ENCODE measurements at regions of chr3 and their contacts with region 1.

Region 1: GRCh38 chr3:155805802-155806618 is at the start of gene C3orf33:
- DNase-seq: peak; percentile 58 to 76 (median 68)
- H3K4me3 ChIP-seq: peak within 1 kb of the TSS; percentile 55 to 87 (median 79)
- H3K27ac ChIP-seq: peak within 1 kb of the TSS in 4 of 5 donors; percentile 87 to 91 (median 88)
- H3K4me1 ChIP-seq: peaks cover 0 to 3% of the 10 kb centered on the region in 2 donors
- H3K27me3 ChIP-seq: no peaks in the 10 kb centered on the region
- CTCF ChIP-seq: peak; percentile 49 to 89 (median 74)
- POLR2A ChIP-seq: peak in 1 of 2 donors; percentile 13
- total RNA-seq, gene C3orf33: 8.4 to 17.1 (median 13.4) TPM

Region 2: DNA sequence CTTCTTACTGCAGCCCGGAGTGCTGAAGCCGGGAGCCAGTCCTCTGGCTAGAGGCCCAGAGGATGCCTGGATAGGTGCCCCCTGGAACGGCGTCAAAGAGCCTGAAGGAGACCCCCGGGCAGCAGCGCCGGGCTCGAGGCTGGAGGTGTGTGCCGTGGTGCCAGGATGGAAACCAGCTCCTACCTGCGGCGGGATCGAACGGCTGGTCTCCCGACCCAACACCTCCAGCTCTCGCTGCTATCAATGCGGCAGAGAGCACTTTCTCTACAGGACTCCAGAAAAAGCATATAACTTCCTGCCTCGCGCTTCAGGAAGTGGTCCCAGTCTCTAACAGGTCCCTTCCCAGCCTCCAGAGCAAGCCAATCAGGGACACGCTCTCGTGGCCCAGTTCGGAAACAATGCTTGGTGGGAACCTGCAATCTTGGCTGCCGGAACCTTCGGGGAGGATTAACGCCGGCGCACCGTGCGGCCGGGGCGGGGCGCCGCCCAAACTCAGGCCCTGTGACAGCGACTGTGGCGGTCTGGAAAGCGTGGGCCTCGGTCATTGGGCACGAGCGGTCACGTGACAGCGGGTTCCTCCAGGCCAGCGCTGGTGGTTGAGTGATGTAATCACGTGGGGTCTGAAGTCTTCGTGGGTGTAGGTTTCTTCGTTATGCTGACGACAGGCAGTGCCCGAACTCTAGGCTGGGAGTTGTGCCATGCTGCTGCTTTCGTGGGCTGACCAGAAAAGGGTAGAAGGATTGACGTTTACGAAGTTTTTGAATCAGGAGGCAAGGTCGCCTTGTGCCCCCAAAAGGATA is 48.3 kb after region 1 on chr3 and contains the start of gene SLC33A1:
- intact Hi-C with region 1: loop called in 1 of 2 experiments (anchors 10 kb)
- DNase-seq: peak; percentile 99 to 100 (median 99)
- H3K4me3 ChIP-seq: peak within 1 kb of the TSS; percentile 47 to 89 (median 80)
- H3K27ac ChIP-seq: peak within 1 kb of the TSS; percentile 74 to 97 (median 93)
- H3K4me1 ChIP-seq: peaks cover 28 to 37% of the 10 kb centered on the region in 2 donors
- H3K27me3 ChIP-seq: no peaks in the 10 kb centered on the region
- CTCF ChIP-seq: no peak
- POLR2A ChIP-seq: peak; percentile 75 to 82
- total RNA-seq, gene SLC33A1: 19.5 to 101 (median 37.8) TPM

Region 3: DNA sequence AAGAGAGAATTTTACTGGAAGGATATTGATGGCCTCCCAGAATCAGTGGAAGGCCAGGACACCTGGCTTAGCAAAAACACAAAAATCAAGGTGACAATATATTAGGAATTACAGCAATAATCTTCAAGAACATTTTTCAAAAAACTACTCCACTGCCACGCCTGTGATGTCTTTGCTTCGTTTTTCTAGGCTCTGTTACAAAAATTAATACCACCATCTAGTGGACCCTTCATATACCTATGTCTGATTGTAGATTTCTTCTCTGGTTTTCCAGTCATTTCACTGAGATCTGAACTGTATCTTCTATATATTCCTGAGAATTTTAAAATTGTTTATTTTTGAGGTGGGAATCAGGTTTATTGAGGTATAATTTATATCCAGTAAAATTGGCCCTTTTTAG is 53.8 kb after region 1 on chr3:
- intact Hi-C with region 1: loop called (anchors 10 kb)
- DNase-seq: no peak
- H3K4me3 ChIP-seq: peak overlapping the region in 1 of 4 donors; percentile 44
- H3K27ac ChIP-seq: peak overlapping the region in 2 of 5 donors; percentile 22 to 46
- H3K4me1 ChIP-seq: peaks cover 0 to 4% of the 10 kb centered on the region in 2 donors
- H3K27me3 ChIP-seq: no peaks in the 10 kb centered on the region
- CTCF ChIP-seq: peak in 5 of 6 experiments; percentile 8 to 46 (median 39)
- POLR2A ChIP-seq: no peak

Region 4: DNA sequence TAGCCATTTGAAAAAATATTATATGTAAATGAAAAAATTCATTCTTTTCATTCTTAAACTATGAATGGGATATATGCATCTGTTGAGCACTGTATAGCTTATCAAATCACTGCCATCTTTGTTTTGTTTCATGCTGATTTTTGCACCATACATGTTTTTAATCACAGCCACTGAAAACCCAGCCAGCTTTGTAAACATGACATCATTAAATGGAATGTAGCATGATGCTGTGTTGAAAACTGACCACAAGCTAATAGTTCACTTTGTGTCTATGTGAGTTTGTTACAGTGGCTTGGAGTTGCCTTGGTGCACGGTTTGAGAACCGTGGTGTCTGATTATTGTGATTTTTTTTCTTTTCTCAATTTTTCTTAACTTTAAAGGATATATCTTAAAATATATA is 140.2 kb after region 1 on chr3:
- intact Hi-C with region 1: no loop called
- DNase-seq: no peak
- H3K4me3 ChIP-seq: no peak overlapping the region
- H3K27ac ChIP-seq: no peak overlapping the region
- H3K4me1 ChIP-seq: peaks cover 2 to 12% of the 10 kb centered on the region in 2 donors
- H3K27me3 ChIP-seq: no peaks in the 10 kb centered on the region
- CTCF ChIP-seq: no peak
- POLR2A ChIP-seq: no peak